MCF 10A (cell line): ENCODE measurements at regions of chr11 and their contacts with region 1.

Region 1: GRCh38 chr11:73625696-73626318 is 20.6 kb upstream of the PLEKHB1 start:
- DNase-seq: peak; percentile 77
- H3K4me3 Mint-ChIP-seq: no peak overlapping the region
- H3K27ac Mint-ChIP-seq: no peak overlapping the region
- H3K4me1 Mint-ChIP-seq: no peaks in the 10 kb centered on the region
- H3K27me3 Mint-ChIP-seq: peaks cover 30% of the 10 kb centered on the region
- CTCF ChIP-seq: peak; percentile 77

Region 2: DNA sequence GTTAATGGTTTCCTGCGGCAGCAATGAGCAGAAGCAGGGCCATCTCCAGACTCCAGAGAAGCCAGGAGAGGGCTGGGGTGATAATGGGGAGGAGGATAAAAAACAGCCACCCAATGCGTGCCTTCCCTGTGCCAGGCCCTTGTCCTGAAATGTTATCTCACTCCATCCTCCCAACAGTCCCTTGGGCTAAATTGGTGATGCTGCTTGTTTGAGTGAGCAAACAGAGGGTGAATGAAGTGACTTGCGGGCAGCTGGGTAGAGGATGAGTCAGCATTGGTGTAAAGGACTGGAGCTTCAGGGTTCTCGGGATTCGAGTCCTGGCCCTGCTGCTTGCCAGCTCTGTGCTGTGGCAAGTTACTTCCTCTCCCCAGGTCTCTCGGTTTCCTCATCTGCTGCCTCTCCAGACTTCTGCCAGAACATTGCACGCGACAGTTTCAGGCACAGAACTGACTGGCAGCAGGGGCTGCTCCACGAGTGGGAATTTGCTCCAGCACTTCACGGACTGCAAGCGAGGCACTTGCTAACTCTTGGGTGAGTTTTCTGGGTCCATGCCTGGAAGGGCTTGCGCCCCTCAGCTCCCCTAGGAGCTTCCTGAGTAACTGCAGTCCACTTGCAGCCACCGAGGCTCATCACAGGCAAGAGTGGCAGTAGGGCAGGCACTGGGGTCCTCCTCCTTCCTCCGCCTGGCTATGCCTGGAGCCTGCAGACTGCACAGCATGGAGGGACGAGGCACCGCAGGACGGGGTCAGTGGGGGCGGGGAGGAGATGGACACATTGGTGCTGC is 353.7 kb before region 1 on chr11 and contains the start of gene P2RY6:
- CTCF ChIA-PET with region 1: no interaction called
- POLR2A ChIA-PET with region 1: no interaction called
- intact Hi-C with region 1: no loop called
- DNase-seq: peak; percentile 80
- H3K4me3 Mint-ChIP-seq: no peak within 1 kb of the TSS
- H3K27ac Mint-ChIP-seq: no peak within 1 kb of the TSS
- H3K4me1 Mint-ChIP-seq: no peaks in the 10 kb centered on the region
- H3K27me3 Mint-ChIP-seq: no peaks in the 10 kb centered on the region
- CTCF ChIP-seq: no peak
- total RNA-seq, gene P2RY6: not detected in 2 replicates

Region 3: DNA sequence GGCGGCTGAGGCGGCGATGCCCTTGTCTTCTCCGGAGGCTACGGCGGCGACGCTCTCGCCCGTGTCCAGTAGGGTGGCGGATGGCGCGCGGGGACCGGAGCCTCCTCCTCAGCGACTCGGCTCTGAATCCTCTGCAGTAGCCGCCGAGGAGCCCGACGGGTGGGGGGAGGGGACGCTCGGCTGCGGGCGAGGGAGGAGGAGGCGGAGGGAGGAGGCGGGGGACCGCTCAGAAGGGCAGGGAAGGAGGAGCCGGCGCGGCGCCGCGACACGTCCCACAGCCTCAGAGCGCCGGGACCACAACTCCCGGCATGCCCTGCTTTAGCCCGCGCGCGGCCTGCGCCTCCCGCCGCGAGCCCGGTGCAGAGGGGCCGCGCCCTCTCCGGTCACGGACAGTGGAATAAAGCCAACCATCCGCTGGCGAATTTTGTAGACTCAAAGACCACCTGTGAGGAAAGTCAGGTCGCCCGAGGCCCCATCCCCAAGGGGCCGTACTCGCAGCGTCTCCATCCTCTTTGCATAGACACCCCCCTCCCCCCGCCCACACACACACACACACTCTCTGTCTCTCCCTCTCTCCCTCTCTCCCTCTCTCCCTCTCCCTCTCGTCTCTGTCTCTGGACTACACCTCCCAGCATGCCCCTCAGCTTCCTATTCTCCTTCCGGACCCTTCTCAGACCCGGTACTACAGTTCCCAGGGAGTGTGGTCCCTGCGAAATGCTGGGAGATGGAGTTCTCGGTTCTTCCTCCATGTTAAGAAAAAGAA is 27.7 kb before region 1 on chr11 and contains the start of gene FAM168A:
- CTCF ChIA-PET with region 1: interaction called, 13 read pairs
- POLR2A ChIA-PET with region 1: interaction called, 3 read pairs
- intact Hi-C with region 1: no loop called
- DNase-seq: peak; percentile 97
- H3K4me3 Mint-ChIP-seq: peak within 1 kb of the TSS; percentile 89
- H3K27ac Mint-ChIP-seq: peak within 1 kb of the TSS; percentile 76
- H3K4me1 Mint-ChIP-seq: peaks cover 18% of the 10 kb centered on the region
- H3K27me3 Mint-ChIP-seq: no peaks in the 10 kb centered on the region
- CTCF ChIP-seq: no peak
- total RNA-seq, gene FAM168A: 13.8 and 14.8 TPM in 2 replicates

Region 4: GRCh38 chr11:73614591-73615244 is 11.1 kb before region 1 on chr11:
- CTCF ChIA-PET with region 1: interaction called, 10 read pairs
- POLR2A ChIA-PET with region 1: no interaction called
- intact Hi-C with region 1: no loop called
- DNase-seq: no peak
- H3K4me3 Mint-ChIP-seq: no peak overlapping the region
- H3K27ac Mint-ChIP-seq: no peak overlapping the region
- H3K4me1 Mint-ChIP-seq: no peaks in the 10 kb centered on the region
- H3K27me3 Mint-ChIP-seq: no peaks in the 10 kb centered on the region
- CTCF ChIP-seq: no peak

Region 5: DNA sequence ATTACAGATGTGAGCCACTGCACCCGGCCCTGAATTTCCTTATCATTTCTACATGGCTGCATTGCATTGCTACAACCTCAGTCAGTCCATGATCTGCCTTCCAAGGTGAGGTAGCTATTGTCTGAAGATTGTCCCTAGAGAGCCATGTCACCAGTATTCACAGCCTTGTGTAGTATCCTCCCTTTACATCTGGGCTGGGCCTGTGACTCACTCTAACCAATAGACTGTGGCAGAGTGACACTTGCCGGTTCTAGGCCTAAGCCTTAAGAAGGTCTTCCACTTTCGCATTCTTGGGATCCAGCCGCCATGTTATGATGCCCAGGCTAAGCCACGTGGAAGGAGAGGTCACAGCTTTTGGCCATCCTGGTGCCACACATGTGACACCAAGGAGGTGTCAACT is 10.4 kb after region 1 on chr11:
- CTCF ChIA-PET with region 1: interaction called, 13 read pairs
- POLR2A ChIA-PET with region 1: no interaction called
- intact Hi-C with region 1: no loop called
- DNase-seq: no peak
- H3K4me3 Mint-ChIP-seq: no peak overlapping the region
- H3K27ac Mint-ChIP-seq: peak overlapping the region; percentile 22
- H3K4me1 Mint-ChIP-seq: no peaks in the 10 kb centered on the region
- H3K27me3 Mint-ChIP-seq: peaks cover 12% of the 10 kb centered on the region
- CTCF ChIP-seq: no peak

Region 6: GRCh38 chr11:73647459-73648100 is 21.8 kb after region 1 on chr11:
- CTCF ChIA-PET with region 1: interaction called, 17 read pairs
- POLR2A ChIA-PET with region 1: no interaction called
- intact Hi-C with region 1: no loop called
- DNase-seq: peak; percentile 39
- H3K4me3 Mint-ChIP-seq: no peak overlapping the region
- H3K27ac Mint-ChIP-seq: no peak overlapping the region
- H3K4me1 Mint-ChIP-seq: no peaks in the 10 kb centered on the region
- H3K27me3 Mint-ChIP-seq: peaks cover 40% of the 10 kb centered on the region
- CTCF ChIP-seq: no peak

Region 7: GRCh38 chr11:73810637-73811036 is 184.8 kb after region 1 on chr11:
- CTCF ChIA-PET with region 1: no interaction called
- POLR2A ChIA-PET with region 1: no interaction called
- intact Hi-C with region 1: no loop called
- DNase-seq: no peak
- H3K4me3 Mint-ChIP-seq: no peak overlapping the region
- H3K27ac Mint-ChIP-seq: no peak overlapping the region
- H3K4me1 Mint-ChIP-seq: no peaks in the 10 kb centered on the region
- H3K27me3 Mint-ChIP-seq: no peaks in the 10 kb centered on the region
- CTCF ChIP-seq: no peak

Region 8: DNA sequence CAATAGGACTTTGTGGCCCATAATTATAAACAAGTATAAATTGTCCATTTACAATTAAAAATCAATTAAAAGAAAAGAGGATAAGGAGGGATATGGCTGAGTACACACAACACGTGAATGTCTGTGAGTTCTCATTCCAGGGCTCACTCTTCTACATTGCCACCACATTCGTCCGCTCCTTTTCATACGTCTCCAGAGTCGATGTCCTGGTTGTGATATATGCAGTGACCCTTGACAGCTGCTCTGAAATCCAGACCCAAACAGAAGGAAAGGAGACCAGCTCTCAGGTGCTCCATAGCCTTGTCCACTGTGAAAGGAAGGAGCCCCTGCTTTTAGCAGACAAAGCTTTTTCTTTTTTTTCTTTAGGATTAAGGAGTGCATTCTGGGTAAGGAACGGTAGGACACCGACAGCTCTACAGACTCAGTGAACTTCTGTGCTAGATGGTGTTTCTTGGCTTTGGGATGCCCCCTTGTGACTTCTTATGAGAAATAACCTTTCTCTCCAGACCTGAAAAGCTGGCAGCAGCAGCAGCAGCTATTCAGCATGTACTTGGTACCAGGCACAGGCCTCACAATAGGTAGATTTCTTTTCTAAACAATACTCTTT is 305.3 kb after region 1 on chr11:
- CTCF ChIA-PET with region 1: interaction called, 6 read pairs
- POLR2A ChIA-PET with region 1: no interaction called
- intact Hi-C with region 1: loop called (anchors 1 kb)
- DNase-seq: peak; percentile 70
- H3K4me3 Mint-ChIP-seq: no peak overlapping the region
- H3K27ac Mint-ChIP-seq: no peak overlapping the region
- H3K4me1 Mint-ChIP-seq: no peaks in the 10 kb centered on the region
- H3K27me3 Mint-ChIP-seq: no peaks in the 10 kb centered on the region
- CTCF ChIP-seq: peak; percentile 40